ENCODE measurements at regions of chr12 and their contacts with region 1.

Region 1: GRCh38 chr12:6540181-6540877 is 6.0 kb downstream of the GAPDH start:
- DNase-seq: peak; percentile 36
- H3K4me3 ChIP-seq: no peak overlapping the region
- H3K27ac ChIP-seq: no peak overlapping the region
- H3K4me1 ChIP-seq: peaks cover 5 to 20% of the 10 kb centered on the region in 2 experiments; a peak in 3 of 4 replicates
- H3K27me3 ChIP-seq: no peaks in the 10 kb centered on the region
- CTCF ChIP-seq: no peak
- EP300 ChIP-seq: no peak
- RAD21 ChIP-seq: no peak

Region 2: GRCh38 chr12:6493497-6494257 is 46.7 kb before region 1 on chr12 and contains the start of gene NCAPD2:
- CTCF ChIA-PET with region 1: interaction called, 11 read pairs
- POLR2A ChIA-PET with region 1: interaction called, 30 read pairs
- DNase-seq: peak; percentile 97
- H3K4me3 ChIP-seq: peak within 1 kb of the TSS; percentile 81 to 97
- H3K27ac ChIP-seq: peak within 1 kb of the TSS; percentile 97 to 99
- H3K4me1 ChIP-seq: peaks cover 13 to 18% of the 10 kb centered on the region in 2 experiments; a peak in 3 of 4 replicates
- H3K27me3 ChIP-seq: no peaks in the 10 kb centered on the region
- CTCF ChIP-seq: peak; percentile 37
- EP300 ChIP-seq: no peak
- RAD21 ChIP-seq: no peak
- polyA plus RNA-seq, gene NCAPD2: 39.8 and 46.9 TPM in 2 replicates

Region 3: DNA sequence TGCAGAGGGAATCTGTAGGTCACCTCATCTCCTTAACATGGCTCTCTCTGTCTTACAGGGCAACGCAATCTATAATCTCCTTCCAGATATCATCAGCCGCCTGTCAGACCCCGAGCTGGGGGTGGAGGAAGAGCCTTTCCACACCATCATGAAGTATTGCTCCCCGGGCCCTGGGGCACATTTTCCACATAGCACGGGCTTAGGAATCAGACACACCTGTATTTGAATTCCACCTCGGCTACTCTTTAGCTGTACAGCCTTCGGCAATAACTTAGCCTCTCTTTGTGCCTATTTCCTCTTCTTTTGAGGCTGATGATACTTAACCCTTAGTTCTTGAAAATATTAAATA is 11.5 kb before region 1 on chr12:
- CTCF ChIA-PET with region 1: interaction called, 9 read pairs
- POLR2A ChIA-PET with region 1: interaction called, 14 read pairs
- DNase-seq: no peak
- H3K4me3 ChIP-seq: no peak overlapping the region
- H3K27ac ChIP-seq: no peak overlapping the region; a peak in 1 of 4 replicates
- H3K4me1 ChIP-seq: peaks cover 10 to 14% of the 10 kb centered on the region in 2 experiments; a peak in 2 of 4 replicates
- H3K27me3 ChIP-seq: no peaks in the 10 kb centered on the region
- CTCF ChIP-seq: no peak
- EP300 ChIP-seq: no peak
- RAD21 ChIP-seq: no peak

Region 4: DNA sequence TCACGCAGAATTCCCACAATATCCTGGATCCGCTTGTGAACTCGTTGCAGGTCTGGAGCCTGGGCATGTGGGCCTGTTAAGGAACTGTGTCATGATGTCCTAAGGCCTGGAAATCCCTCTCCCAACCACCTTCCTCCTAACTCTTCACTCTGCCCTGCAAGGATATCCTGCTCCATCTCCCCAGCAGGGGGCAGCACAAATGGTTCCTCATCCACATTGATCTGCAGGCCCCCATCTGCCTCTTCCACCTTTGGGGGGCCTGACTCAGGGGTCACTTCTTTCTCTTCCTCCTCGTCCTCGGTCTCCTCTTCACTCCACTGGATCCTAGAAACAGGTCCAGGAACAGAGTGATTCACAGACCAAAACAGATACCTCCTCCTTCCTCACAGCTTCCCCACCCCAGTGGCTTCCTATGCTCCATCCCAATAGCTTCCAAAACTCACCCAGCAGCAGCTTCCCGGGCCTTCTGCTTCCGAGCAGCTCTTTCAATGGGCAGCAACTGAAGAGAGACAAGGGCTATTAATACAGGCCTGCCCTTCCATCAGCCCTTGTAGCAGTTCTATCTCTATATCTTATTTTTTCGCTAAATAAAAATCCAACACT is 23.2 kb after region 1 on chr12:
- CTCF ChIA-PET with region 1: interaction called, 228 read pairs
- POLR2A ChIA-PET with region 1: interaction called, 8 read pairs
- DNase-seq: peak; percentile 73
- H3K4me3 ChIP-seq: peak overlapping the region in 1 of 2 experiments; percentile 35; a peak in 1 of 4 replicates
- H3K27ac ChIP-seq: no peak overlapping the region
- H3K4me1 ChIP-seq: peaks cover 1 to 5% of the 10 kb centered on the region in 2 experiments; a peak in 2 of 4 replicates
- H3K27me3 ChIP-seq: no peaks in the 10 kb centered on the region
- CTCF ChIP-seq: peak; percentile 91
- EP300 ChIP-seq: no peak
- RAD21 ChIP-seq: peak; percentile 24; the same call in 1 of the 2 replicates

Measured in SK-N-SH (cell line).